B cell (primary cell): ENCODE measurements at regions of chr1 and their contacts with region 1.

Region 1: GRCh38 chr1:205658943-205659581 is 21.2 kb downstream of the SLC45A3 start:
- DNase-seq: peak; percentile 87
- ATAC-seq: peak; percentile 93
- H3K4me3 ChIP-seq: no peak overlapping the region
- H3K4me3 Mint-ChIP-seq: peak overlapping the region; percentile 10
- H3K27ac ChIP-seq: peak overlapping the region in 1 of 2 donors; percentile 72
- H3K27ac Mint-ChIP-seq: peak overlapping the region; percentile 32
- H3K4me1 ChIP-seq: peaks cover 18 to 25% of the 10 kb centered on the region in 2 donors
- H3K4me1 Mint-ChIP-seq: peaks cover 22% of the 10 kb centered on the region
- H3K27me3 ChIP-seq: no peaks in the 10 kb centered on the region
- H3K27me3 Mint-ChIP-seq: no peaks in the 10 kb centered on the region
- CTCF ChIP-seq: peak; percentile 89

Region 2: DNA sequence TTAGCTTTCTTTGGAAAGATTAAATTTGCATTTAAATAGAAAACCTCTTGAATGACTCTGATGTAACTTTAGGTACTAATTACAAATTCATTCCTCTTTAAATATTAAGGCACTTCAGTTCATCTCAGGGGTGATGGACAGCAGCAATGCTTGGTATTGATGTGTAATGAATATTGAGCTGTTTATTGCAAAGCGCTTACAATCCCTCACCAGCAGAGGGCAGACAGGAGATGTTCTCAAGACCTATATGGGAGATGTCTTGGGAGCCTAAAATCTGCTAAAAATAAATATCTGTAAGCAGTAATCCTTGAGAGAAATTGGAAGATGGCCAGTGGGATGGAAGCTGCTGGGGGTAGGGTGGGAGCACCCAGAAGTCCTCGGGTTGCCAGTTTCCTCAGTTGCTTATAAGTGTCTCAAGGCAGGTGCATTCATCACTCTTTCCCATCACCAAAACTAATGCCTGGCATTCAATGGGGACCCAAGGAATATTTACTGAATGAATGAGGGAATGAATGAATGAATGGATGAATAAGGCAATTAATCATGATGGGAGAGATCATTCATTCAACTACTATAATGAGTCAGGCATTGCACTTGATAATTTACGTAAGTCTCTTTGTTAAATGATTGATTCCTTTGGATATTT is 304.7 kb before region 1 on chr1:
- CTCF ChIA-PET with region 1: interaction called, 6 read pairs
- POLR2A ChIA-PET with region 1: no interaction called
- intact Hi-C with region 1: loop called (anchors 1 kb)
- DNase-seq: peak; percentile 78
- ATAC-seq: peak; percentile 58
- H3K4me3 ChIP-seq: no peak overlapping the region
- H3K4me3 Mint-ChIP-seq: no peak overlapping the region
- H3K27ac ChIP-seq: no peak overlapping the region
- H3K27ac Mint-ChIP-seq: no peak overlapping the region
- H3K4me1 ChIP-seq: peaks cover 16 to 20% of the 10 kb centered on the region in 2 donors
- H3K4me1 Mint-ChIP-seq: peaks cover 29% of the 10 kb centered on the region
- H3K27me3 ChIP-seq: peaks cover 0 to 4% (median 0%) of the 10 kb centered on the region in 4 experiments
- H3K27me3 Mint-ChIP-seq: peaks cover 19% of the 10 kb centered on the region
- CTCF ChIP-seq: peak; percentile 95

Region 3: GRCh38 chr1:205584732-205585131 is 74.3 kb before region 1 on chr1:
- CTCF ChIA-PET with region 1: interaction called, 658 read pairs
- POLR2A ChIA-PET with region 1: interaction called, 10 read pairs
- intact Hi-C with region 1: no loop called
- DNase-seq: no peak
- ATAC-seq: no peak
- H3K4me3 ChIP-seq: no peak overlapping the region
- H3K4me3 Mint-ChIP-seq: no peak overlapping the region
- H3K27ac ChIP-seq: peak overlapping the region in 1 of 2 donors; percentile 43
- H3K27ac Mint-ChIP-seq: peak overlapping the region; percentile 77
- H3K4me1 ChIP-seq: peaks cover 30 to 49% of the 10 kb centered on the region in 2 donors
- H3K4me1 Mint-ChIP-seq: peaks cover 32% of the 10 kb centered on the region
- H3K27me3 ChIP-seq: no peaks in the 10 kb centered on the region
- H3K27me3 Mint-ChIP-seq: no peaks in the 10 kb centered on the region
- CTCF ChIP-seq: peak; percentile 17

Region 4: DNA sequence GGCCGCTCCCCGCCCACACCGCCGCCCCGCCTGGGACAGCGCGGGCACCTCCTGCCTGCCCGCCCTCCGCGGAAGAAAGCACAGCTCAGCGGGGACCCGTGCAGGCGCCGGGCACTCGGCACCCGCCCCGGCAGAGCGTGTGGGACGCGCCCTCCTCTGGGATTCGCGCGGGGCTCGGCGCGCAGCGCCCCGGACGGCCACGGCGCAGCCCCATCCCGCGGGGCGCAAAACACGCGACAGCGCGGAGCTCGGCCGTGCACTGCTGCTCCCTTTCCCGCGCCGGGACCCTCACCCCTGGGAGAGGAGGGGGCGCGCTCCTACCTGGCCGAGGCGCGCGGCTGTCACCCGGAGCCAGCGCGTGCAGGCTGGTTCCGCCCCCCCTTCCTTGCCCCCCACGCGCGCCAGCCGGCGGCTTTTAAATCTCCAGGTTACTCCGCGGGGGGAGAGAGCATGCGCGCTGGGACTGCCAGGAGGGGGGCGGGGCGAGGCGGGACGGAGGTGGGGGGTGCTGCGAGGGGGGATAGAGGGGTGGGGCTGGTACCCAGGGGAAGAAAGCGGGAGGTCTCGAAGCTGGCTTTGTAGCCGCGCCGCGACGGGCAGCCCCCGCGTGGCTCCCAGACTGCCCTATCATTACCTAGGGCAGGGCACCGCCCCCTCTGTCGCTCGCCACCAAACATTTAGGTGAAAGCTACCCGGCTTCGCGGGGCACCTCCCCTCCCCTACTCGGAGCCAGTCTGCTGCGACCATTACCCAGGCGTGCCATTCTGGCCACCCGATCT is 21.2 kb after region 1 on chr1 and contains the start of gene SLC45A3:
- CTCF ChIA-PET with region 1: interaction called, 76 read pairs
- POLR2A ChIA-PET with region 1: interaction called, 3 read pairs
- intact Hi-C with region 1: loop called (anchors 2 kb)
- DNase-seq: peak; percentile 73
- ATAC-seq: peak; percentile 62
- H3K4me3 ChIP-seq: peak within 1 kb of the TSS; percentile 27 to 80 (median 70)
- H3K4me3 Mint-ChIP-seq: peak within 1 kb of the TSS; percentile 89
- H3K27ac ChIP-seq: peak within 1 kb of the TSS in 1 of 2 donors; percentile 62
- H3K27ac Mint-ChIP-seq: peak within 1 kb of the TSS; percentile 63
- H3K4me1 ChIP-seq: peaks cover 29 to 37% of the 10 kb centered on the region in 2 donors
- H3K4me1 Mint-ChIP-seq: peaks cover 32% of the 10 kb centered on the region
- H3K27me3 ChIP-seq: no peaks in the 10 kb centered on the region
- H3K27me3 Mint-ChIP-seq: no peaks in the 10 kb centered on the region
- CTCF ChIP-seq: no peak
- total RNA-seq, gene SLC45A3: 4.7 and 5.0 TPM in 2 replicates

Region 5: DNA sequence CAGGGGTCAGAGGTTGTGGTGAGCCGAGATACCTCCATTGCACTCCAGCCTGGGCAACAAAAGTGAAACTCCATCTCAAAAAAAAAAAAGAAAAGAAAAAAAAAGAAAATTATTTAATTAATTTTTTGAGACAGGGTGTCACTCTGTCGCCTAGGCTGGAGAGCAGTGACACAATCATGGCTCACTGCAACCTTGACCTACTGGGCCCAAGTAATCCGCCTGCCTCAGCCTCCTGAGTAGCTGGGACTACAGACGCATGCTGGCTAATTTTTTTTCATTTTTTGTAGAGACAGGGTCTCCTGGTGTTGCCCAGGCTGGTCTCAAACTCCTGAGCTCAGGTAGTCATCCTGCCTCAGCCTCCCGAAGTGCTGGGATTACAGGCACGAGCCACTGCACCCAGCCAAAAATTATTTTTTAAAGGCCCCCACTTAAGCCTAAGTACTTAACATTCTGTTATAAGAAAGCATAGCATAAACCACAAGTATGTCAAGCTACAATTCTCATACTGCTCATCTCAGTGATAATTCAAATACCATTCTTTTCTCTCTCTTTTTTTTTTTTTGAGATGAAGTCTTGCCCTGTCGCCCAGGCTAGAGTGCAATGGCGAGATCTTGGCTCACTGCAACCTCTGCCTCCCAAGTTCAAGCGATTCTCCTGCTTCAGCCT is 71.0 kb after region 1 on chr1:
- CTCF ChIA-PET with region 1: interaction called, 45 read pairs
- POLR2A ChIA-PET with region 1: no interaction called
- intact Hi-C with region 1: no loop called
- DNase-seq: no peak
- ATAC-seq: no peak
- H3K4me3 ChIP-seq: no peak overlapping the region
- H3K4me3 Mint-ChIP-seq: no peak overlapping the region
- H3K27ac ChIP-seq: no peak overlapping the region
- H3K27ac Mint-ChIP-seq: no peak overlapping the region
- H3K4me1 ChIP-seq: no peaks in the 10 kb centered on the region
- H3K4me1 Mint-ChIP-seq: peaks cover 9% of the 10 kb centered on the region
- H3K27me3 ChIP-seq: no peaks in the 10 kb centered on the region
- H3K27me3 Mint-ChIP-seq: no peaks in the 10 kb centered on the region
- CTCF ChIP-seq: no peak

Region 6: GRCh38 chr1:205907794-205908193 is 248.7 kb after region 1 on chr1:
- CTCF ChIA-PET with region 1: interaction called, 11 read pairs
- POLR2A ChIA-PET with region 1: no interaction called
- intact Hi-C with region 1: no loop called
- DNase-seq: no peak
- ATAC-seq: no peak
- H3K4me3 ChIP-seq: no peak overlapping the region
- H3K4me3 Mint-ChIP-seq: no peak overlapping the region
- H3K27ac ChIP-seq: no peak overlapping the region
- H3K27ac Mint-ChIP-seq: no peak overlapping the region
- H3K4me1 ChIP-seq: no peaks in the 10 kb centered on the region
- H3K4me1 Mint-ChIP-seq: peaks cover 6% of the 10 kb centered on the region
- H3K27me3 ChIP-seq: no peaks in the 10 kb centered on the region
- H3K27me3 Mint-ChIP-seq: no peaks in the 10 kb centered on the region
- CTCF ChIP-seq: no peak